IMR-90 (cell line): ENCODE measurements at regions of chr11 and their contacts with region 1.

Region 1: DNA sequence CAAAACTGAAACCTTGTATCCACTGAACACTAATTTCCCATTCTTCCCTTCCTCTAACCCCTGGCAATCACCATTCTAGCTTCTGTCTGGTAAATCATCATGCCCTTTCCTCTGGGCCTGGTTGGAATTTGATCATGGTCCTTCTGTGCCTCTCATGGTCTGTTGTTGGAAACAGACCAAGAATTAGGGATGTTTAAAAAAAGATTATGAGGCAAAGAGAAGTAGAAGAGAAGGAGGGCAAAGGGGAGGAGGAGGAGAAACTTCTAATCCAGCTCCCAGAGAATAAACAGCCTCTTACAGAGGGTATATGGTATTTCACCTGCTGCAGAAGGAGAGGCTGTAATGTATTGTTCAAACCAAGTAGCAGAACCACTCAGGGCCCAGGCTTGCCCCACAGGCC is 10.6 kb downstream of the BCO2 start:
- DNase-seq: no peak
- ATAC-seq: peak; percentile 46
- H3K4me3 ChIP-seq: no peak overlapping the region
- H3K27ac ChIP-seq: no peak overlapping the region
- H3K4me1 ChIP-seq: peaks cover 3% of the 10 kb centered on the region; the same call in 1 of the 2 replicates
- H3K27me3 ChIP-seq: no peaks in the 10 kb centered on the region
- CTCF ChIP-seq: no peak
- POLR2A ChIP-seq: no peak
- RAD21 ChIP-seq: no peak

Region 2: DNA sequence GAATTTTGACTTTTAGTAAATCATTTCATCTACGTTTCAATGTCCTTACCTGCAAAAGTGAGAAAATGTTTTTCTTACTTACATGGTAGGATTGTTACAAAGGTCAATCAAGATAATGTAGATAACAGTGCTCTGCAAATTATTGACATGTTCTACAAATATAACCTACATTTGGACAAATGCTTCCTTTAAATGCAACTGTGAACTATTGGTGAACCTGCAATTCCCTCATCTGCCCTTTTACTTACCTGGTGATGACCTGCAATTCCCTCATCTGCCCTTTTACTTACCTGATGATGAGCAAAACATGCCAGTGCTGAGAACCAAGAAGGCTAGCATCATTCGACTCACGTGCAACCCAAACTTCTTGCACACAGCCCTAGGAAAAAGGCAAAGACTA is 325.6 kb before region 1 on chr11:
- CTCF ChIA-PET with region 1: no interaction called
- POLR2A ChIA-PET with region 1: no interaction called
- dilution Hi-C with region 1: no loop called
- in situ Hi-C with region 1: no loop called
- intact Hi-C with region 1: no loop called
- DNase-seq: no peak
- ATAC-seq: no peak
- H3K4me3 ChIP-seq: no peak overlapping the region
- H3K27ac ChIP-seq: no peak overlapping the region
- H3K4me1 ChIP-seq: no peaks in the 10 kb centered on the region
- H3K27me3 ChIP-seq: no peaks in the 10 kb centered on the region
- CTCF ChIP-seq: no peak
- POLR2A ChIP-seq: no peak
- RAD21 ChIP-seq: no peak

Region 3: GRCh38 chr11:112899235-112900006 is 713.5 kb after region 1 on chr11:
- CTCF ChIA-PET with region 1: no interaction called
- POLR2A ChIA-PET with region 1: interaction called, 14 read pairs
- dilution Hi-C with region 1: no loop called
- in situ Hi-C with region 1: no loop called
- intact Hi-C with region 1: no loop called
- DNase-seq: no peak
- ATAC-seq: no peak
- H3K4me3 ChIP-seq: no peak overlapping the region
- H3K27ac ChIP-seq: no peak overlapping the region
- H3K4me1 ChIP-seq: no peaks in the 10 kb centered on the region
- H3K27me3 ChIP-seq: no peaks in the 10 kb centered on the region
- CTCF ChIP-seq: no peak
- POLR2A ChIP-seq: no peak
- RAD21 ChIP-seq: no peak